ENCODE measurements at regions of chr14 and their contacts with region 1.

Region 1: GRCh38 chr14:80213599-80213998 is 2.3 kb upstream of the DIO2 start:
- DNase-seq: peak; percentile 40 to 86
- ATAC-seq: peak in 1 of 2 experiments; percentile 7; a peak in 1 of 6 replicates
- H3K4me3 ChIP-seq: no peak overlapping the region
- H3K27ac ChIP-seq: peak overlapping the region; percentile 80 to 84
- H3K4me1 ChIP-seq: peaks cover 63% of the 10 kb centered on the region
- CTCF ChIP-seq: peak; percentile 62
- EP300 ChIP-seq: no peak
- POLR2A ChIP-seq: no peak
- RAD21 ChIP-seq: peak; percentile 73 to 89

Region 2: GRCh38 chr14:79871136-79871535 is 342.5 kb before region 1 on chr14:
- CTCF ChIA-PET with region 1: no interaction called
- POLR2A ChIA-PET with region 1: no interaction called
- DNase-seq: no peak
- ATAC-seq: no peak
- H3K4me3 ChIP-seq: no peak overlapping the region
- H3K27ac ChIP-seq: no peak overlapping the region
- H3K4me1 ChIP-seq: no peaks in the 10 kb centered on the region
- CTCF ChIP-seq: no peak
- EP300 ChIP-seq: no peak
- POLR2A ChIP-seq: no peak
- RAD21 ChIP-seq: no peak

Region 3: GRCh38 chr14:79971330-79971729 is 242.3 kb before region 1 on chr14:
- CTCF ChIA-PET with region 1: no interaction called
- POLR2A ChIA-PET with region 1: no interaction called
- DNase-seq: peak in 1 of 2 experiments; percentile 3
- ATAC-seq: no peak
- H3K4me3 ChIP-seq: no peak overlapping the region
- H3K27ac ChIP-seq: no peak overlapping the region
- H3K4me1 ChIP-seq: no peaks in the 10 kb centered on the region
- CTCF ChIP-seq: no peak
- EP300 ChIP-seq: no peak
- POLR2A ChIP-seq: no peak
- RAD21 ChIP-seq: no peak

Region 4: GRCh38 chr14:80202888-80203562 is 10.6 kb before region 1 on chr14:
- CTCF ChIA-PET with region 1: interaction called, 12 read pairs
- POLR2A ChIA-PET with region 1: interaction called, 3 read pairs
- DNase-seq: peak in 1 of 2 experiments; percentile 45
- ATAC-seq: 0 out of 6 replicates have a peak, but pooled peaks of 1 of the 2 experiments have one; percentile 8
- H3K4me3 ChIP-seq: no peak overlapping the region
- H3K27ac ChIP-seq: no peak overlapping the region
- H3K4me1 ChIP-seq: peaks cover 23% of the 10 kb centered on the region; the same call in 2 of the 3 replicates
- CTCF ChIP-seq: 0 out of 3 replicates have a peak, but pooled peaks have one; percentile 9
- EP300 ChIP-seq: no peak
- POLR2A ChIP-seq: no peak
- RAD21 ChIP-seq: peak in 1 of 2 experiments; percentile 36; a peak in 2 of 5 replicates

Region 5: GRCh38 chr14:80862983-80863382 is 649.4 kb after region 1 on chr14:
- CTCF ChIA-PET with region 1: interaction called, 14 read pairs
- POLR2A ChIA-PET with region 1: no interaction called
- DNase-seq: no peak
- ATAC-seq: no peak
- H3K4me3 ChIP-seq: no peak overlapping the region
- H3K27ac ChIP-seq: no peak overlapping the region
- H3K4me1 ChIP-seq: no peaks in the 10 kb centered on the region
- CTCF ChIP-seq: peak; percentile 59
- EP300 ChIP-seq: no peak
- POLR2A ChIP-seq: no peak
- RAD21 ChIP-seq: peak; percentile 48 to 69